ENCODE measurements at regions of chr3 and their contacts with region 1.

Region 1: GRCh38 chr3:82633319-82633718 is 871.9 kb upstream of the GBE1 start:
- DNase-seq: no peak
- ATAC-seq: no peak
- H3K4me3 ChIP-seq: no peak overlapping the region
- H3K27ac ChIP-seq: no peak overlapping the region
- H3K4me1 ChIP-seq: no peaks in the 10 kb centered on the region
- H3K27me3 ChIP-seq: no peaks in the 10 kb centered on the region
- CTCF ChIP-seq: no peak

Region 2: GRCh38 chr3:82229397-82229796 is 403.9 kb before region 1 on chr3:
- intact Hi-C with region 1: no loop called
- DNase-seq: no peak
- ATAC-seq: no peak
- H3K4me3 ChIP-seq: peak overlapping the region in 3 of 10 donors; percentile 11 to 20 (median 13)
- H3K27ac ChIP-seq: no peak overlapping the region
- H3K4me1 ChIP-seq: no peaks in the 10 kb centered on the region
- H3K27me3 ChIP-seq: no peaks in the 10 kb centered on the region
- CTCF ChIP-seq: no peak

Region 3: GRCh38 chr3:82610236-82610635 is 23.1 kb before region 1 on chr3:
- intact Hi-C with region 1: loop called in 1 of 10 experiments (anchors 2 kb)
- DNase-seq: no peak
- ATAC-seq: no peak
- H3K4me3 ChIP-seq: no peak overlapping the region
- H3K27ac ChIP-seq: no peak overlapping the region
- H3K4me1 ChIP-seq: no peaks in the 10 kb centered on the region
- H3K27me3 ChIP-seq: no peaks in the 10 kb centered on the region
- CTCF ChIP-seq: no peak

Region 4: GRCh38 chr3:82685761-82686160 is 52.4 kb after region 1 on chr3:
- intact Hi-C with region 1: no loop called
- DNase-seq: no peak
- ATAC-seq: no peak
- H3K4me3 ChIP-seq: no peak overlapping the region
- H3K27ac ChIP-seq: no peak overlapping the region
- H3K4me1 ChIP-seq: no peaks in the 10 kb centered on the region
- H3K27me3 ChIP-seq: no peaks in the 10 kb centered on the region
- CTCF ChIP-seq: no peak

Measured in heart right ventricle (tissue), 16 donors.